ENCODE measurements at regions of chr11 and their contacts with region 1.

Region 1: DNA sequence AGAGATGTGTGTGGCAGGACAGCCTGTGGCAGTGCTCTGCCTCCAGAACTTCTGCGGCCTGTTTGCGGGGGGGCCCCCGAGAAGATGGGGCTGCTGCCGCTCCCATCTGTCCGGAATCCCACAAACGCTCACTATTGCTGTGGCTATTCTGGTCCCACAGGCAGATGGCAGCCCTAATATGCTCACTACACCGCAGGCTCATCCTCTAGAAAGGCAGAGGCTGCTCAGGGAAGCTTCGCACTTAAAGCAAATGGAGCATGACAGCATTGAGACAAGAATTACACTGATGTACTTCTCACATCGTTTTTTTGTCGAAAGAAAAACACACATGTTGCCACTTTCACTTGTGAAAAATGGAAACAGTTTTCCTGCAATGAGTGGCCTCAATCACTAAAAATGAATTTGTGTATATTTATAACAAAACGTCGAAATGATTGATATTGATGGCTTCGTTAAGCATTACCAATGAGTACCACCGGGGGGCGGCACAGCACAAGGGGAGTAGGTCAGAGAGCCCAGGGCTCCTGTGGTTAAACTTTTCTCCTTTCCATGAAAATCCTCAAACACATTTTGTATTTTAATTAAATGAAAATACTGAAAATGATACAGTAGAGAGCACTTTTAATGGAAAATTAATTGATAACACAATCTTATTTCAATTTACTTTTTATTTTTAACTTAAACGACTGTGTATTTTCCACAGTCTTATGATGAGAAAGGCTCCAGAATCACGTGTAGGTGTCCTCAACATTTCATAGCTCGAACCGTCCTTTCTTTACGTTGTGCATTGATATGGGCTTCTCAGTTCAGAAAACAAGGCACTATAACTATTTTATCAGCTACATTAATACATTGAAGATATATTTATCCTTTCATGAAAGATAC is 69.1 kb downstream of the CTTN start:
- DNase-seq: peak; percentile 39
- ATAC-seq: peak; percentile 72
- H3K4me3 ChIP-seq: no peak overlapping the region
- H3K27ac ChIP-seq: no peak overlapping the region
- H3K4me1 ChIP-seq: peaks cover 2% of the 10 kb centered on the region; the same call in 1 of the 2 replicates
- H3K27me3 ChIP-seq: peaks cover 18% of the 10 kb centered on the region
- CTCF ChIP-seq: peak; percentile 93
- POLR2A ChIP-seq: peak; percentile 40
- RAD21 ChIP-seq: peak; percentile 96

Region 2: DNA sequence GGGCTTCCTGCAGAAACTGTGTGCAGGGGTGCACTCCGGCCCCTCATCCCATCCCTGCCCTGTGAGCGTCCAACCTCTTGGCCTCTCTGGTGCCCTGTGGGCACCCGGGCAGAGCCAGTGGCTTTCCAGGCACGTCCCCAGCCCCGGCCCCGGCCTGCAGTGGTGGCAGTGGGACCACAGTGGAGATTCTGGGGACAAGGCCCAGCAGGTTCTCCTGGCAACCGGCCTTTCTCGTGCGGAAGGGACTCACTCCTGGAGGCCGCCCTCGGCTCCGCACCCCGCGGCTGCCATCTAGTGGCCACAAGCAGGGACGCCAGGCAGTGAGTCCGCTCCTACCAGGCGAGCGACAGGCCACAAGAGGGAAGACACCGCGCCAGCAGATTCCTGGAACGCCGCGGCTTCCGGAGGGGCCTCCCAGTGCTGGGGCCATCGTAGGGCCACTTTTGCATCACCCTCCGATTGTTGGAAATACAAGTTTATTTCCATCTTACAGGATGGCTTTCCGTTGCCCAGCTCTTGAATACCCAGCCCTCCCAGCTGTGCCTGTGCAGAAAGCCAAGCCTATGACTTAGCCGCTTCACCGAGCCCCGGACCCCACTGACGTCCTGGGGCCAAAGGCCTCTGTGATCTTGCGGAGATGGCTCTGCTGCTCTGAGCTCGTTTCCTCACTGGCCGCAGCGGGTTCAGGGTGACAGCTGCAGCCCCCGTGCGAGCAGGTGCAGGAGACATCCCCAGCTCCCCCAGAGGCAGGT is 288.1 kb after region 1 on chr11:
- CTCF ChIA-PET with region 1: interaction called, 5 read pairs
- POLR2A ChIA-PET with region 1: no interaction called
- dilution Hi-C with region 1: no loop called
- in situ Hi-C with region 1: loop called (anchors 5 kb)
- intact Hi-C with region 1: loop called (anchors 1 kb)
- DNase-seq: peak; percentile 46
- ATAC-seq: peak; percentile 99
- H3K4me3 ChIP-seq: no peak overlapping the region
- H3K27ac ChIP-seq: no peak overlapping the region
- H3K4me1 ChIP-seq: no peaks in the 10 kb centered on the region
- H3K27me3 ChIP-seq: no peaks in the 10 kb centered on the region; the same call in 1 of the 2 replicates
- CTCF ChIP-seq: peak; percentile 91
- POLR2A ChIP-seq: no peak
- RAD21 ChIP-seq: peak; percentile 87

Region 3: DNA sequence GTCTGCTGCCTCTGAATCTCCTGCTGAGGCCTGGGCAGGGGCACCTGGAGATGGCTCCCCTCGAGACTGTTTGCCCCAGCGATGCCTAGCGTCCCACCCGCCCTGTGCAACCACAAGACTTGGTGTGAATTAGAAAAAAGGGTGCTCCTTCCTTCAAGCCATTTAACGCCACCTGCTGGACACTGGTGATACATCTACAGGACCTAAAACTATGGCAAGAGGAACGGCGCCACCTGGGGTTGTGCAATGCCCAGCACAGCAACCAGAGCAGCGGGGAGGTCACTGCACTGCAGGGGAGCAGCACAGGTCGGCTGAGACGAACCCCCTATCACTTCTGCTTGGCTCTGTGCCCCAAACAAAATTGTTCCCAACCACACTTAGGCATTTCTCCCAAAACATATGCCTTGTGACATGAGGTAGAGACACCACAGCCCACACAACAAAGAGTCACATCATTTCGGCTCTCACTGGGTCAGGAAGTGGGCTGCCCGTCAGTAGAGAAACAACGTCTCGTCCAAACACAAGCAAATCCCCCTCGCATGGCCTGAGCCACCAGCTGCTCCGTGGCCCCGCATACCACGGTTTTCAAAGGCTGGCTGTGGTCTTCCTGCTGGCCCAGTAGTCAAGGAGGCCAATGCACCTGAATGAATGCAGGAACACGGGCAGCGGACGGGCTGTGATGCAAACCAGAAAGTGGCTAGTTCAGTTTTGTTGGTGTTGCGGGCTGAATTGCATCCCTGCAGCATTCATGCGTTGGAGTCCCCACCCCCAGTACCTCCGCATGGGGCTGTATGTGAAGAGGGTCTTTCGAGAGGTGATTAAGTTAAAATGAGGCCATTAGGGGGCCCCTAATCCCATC is 613.0 kb after region 1 on chr11:
- CTCF ChIA-PET with region 1: no interaction called
- POLR2A ChIA-PET with region 1: no interaction called
- dilution Hi-C with region 1: no loop called
- in situ Hi-C with region 1: no loop called
- intact Hi-C with region 1: loop called (anchors 1 kb)
- DNase-seq: peak; percentile 58
- ATAC-seq: peak; percentile 76
- H3K4me3 ChIP-seq: no peak overlapping the region
- H3K27ac ChIP-seq: no peak overlapping the region
- H3K4me1 ChIP-seq: no peaks in the 10 kb centered on the region
- H3K27me3 ChIP-seq: no peaks in the 10 kb centered on the region
- CTCF ChIP-seq: peak; percentile 85
- POLR2A ChIP-seq: no peak
- RAD21 ChIP-seq: peak; percentile 68

Region 4: DNA sequence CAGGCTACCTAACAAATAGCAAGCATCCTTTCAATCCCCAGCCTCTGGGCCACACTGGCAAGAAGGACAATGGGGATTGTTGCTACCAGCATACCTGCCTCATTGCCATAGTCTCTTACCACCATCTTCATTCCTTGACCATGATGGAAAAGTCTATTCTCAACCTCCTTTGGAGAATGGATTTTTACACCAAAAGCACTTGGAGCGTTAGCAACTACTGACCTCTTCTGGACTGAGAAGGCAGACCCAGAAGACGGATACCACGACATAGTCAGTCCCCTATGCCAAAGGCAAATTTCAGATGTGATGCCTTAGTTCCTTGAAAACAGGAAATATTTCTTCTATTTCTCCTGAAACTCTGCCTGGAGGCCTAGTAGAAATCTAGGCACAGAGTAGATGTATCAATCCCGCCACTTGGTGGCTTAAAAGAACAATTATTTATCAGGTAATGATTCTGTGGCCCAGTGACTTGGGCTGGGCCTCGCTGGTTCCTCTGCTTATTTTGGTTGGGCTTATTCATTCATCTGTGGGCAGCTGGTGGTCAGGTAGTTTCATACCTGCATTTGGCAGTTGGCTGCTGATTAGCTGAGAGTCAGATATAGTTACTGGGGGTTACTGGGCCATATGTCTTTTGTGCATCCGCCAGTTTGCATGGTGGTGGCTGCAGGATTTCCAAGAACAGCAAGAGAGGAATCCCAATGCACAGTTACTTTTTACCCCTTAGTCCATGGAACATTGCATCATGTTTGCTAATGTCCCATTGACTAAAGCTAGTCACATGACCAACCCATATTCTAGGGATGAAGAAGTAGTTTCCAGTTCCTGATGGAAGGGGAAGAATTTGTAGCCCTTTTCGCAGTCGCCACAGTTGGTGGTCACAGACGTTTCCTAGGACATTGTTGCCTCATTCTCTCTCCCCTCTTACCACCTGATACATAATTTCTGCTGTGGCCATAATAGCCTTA is 905.5 kb after region 1 on chr11:
- CTCF ChIA-PET with region 1: no interaction called
- POLR2A ChIA-PET with region 1: no interaction called
- dilution Hi-C with region 1: no loop called
- in situ Hi-C with region 1: no loop called
- intact Hi-C with region 1: loop called (anchors 5 kb)
- DNase-seq: peak; percentile 50
- ATAC-seq: peak; percentile 89
- H3K4me3 ChIP-seq: no peak overlapping the region
- H3K27ac ChIP-seq: no peak overlapping the region
- H3K4me1 ChIP-seq: no peaks in the 10 kb centered on the region
- H3K27me3 ChIP-seq: peaks cover 25% of the 10 kb centered on the region
- CTCF ChIP-seq: peak; percentile 65
- POLR2A ChIP-seq: no peak
- RAD21 ChIP-seq: peak; percentile 82

Region 5: DNA sequence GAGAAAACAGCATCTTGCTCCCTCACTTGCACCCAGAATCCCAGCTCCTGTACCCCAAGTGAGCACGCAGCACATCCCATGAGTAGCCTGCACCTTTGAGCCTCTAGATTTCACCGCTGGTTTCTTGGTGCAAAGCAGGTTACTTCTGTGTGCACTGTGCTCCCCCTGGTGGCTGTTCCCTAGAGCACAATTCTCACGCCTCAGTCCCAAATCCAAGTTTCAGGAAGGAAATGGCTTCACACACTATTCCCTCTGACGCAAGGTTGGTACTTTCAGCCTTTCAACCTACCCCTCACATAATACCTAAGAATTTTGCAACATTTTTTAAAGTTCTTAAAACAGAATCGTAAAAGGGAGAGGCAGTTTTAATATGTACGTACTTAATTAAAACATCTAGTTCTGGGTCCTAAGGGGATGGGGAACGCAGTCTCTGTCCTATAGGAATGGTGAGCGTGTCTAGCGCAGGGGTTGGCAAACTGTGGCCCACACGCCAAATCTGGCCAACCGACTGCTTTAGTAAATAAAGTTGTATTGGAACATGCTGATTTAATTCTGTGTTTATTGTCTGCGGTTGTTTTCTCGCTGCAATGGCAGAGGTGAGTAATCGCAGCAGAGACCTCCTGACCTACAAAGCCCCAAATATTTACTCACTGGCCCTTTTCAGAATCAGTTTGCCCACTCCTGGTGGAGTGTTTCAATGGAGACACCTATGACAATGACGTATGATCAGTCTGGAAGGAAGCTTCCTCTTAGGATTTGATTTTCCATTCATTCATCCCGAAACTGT is 953.2 kb after region 1 on chr11:
- CTCF ChIA-PET with region 1: no interaction called
- POLR2A ChIA-PET with region 1: no interaction called
- dilution Hi-C with region 1: no loop called
- in situ Hi-C with region 1: no loop called
- intact Hi-C with region 1: loop called (anchors 1 kb)
- DNase-seq: peak; percentile 55
- ATAC-seq: peak; percentile 74
- H3K4me3 ChIP-seq: no peak overlapping the region
- H3K27ac ChIP-seq: no peak overlapping the region
- H3K4me1 ChIP-seq: no peaks in the 10 kb centered on the region
- H3K27me3 ChIP-seq: peaks cover 23% of the 10 kb centered on the region
- CTCF ChIP-seq: peak; percentile 70
- POLR2A ChIP-seq: no peak
- RAD21 ChIP-seq: peak; percentile 82

Measured in IMR-90 (cell line).